Prostate gland (tissue), 2 donors: ENCODE measurements at regions of chr12 and their contacts with region 1.

Region 1: DNA sequence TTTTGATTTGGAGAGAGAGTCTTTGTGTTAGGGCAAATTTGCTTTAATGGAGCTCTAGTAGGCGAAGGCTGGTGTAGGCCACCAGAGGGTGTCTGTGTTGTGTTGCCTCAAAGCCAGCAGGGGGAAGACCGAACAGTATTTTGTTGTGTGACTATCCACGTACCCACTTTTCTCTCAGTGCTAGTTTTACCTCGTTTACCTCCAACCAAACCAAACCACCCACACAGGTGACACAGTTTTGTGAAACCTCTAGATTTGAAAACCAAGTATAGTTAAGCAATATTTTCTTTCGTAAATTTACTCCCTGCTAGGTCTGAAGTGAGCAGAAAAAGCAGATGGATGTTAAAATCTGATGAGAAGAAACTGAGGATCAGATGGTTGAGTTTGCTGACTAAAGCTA is 36.3 kb upstream of the NPFF start:
- DNase-seq: peak; percentile 71
- H3K4me3 ChIP-seq: no peak overlapping the region
- H3K27ac ChIP-seq: peak overlapping the region; percentile 32 to 72
- H3K4me1 ChIP-seq: peaks cover 4% of the 10 kb centered on the region
- H3K27me3 ChIP-seq: no peaks in the 10 kb centered on the region
- CTCF ChIP-seq: peak; percentile 79 to 98 (median 91)
- POLR2A ChIP-seq: no peak

Region 2: DNA sequence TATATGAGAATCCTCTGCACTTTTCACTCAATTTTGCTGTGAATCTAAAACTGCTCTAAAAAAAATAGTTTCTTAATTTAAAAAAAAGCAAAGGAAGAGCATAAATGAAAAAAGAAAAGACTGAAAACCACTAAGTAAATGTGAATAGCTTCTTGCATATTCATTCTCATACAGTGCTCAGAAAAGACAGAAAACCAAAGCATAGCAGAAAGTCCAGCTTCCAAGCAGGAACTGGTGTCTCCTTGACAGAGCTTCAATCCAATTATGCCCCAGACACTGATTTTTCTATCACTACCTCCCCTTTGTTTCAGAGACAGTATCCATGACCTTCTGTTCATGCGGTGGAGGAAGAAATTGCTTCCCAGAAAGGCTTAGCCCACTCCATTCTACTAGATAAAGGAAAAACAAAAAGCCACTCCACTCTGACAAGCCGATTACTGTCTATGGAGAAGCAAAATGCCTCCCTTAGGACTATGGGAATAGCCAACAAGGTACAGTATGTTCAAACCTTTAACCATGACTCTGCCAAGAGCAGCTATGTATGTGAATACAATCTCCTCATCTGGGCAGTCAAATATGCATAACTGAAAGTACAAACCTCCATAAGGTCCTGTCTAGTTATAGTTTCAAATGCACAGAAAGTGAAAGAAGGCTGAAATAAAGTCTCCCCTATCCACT is 42.0 kb after region 1 on chr12:
- intact Hi-C with region 1: no loop called
- DNase-seq: no peak
- H3K4me3 ChIP-seq: no peak overlapping the region
- H3K27ac ChIP-seq: no peak overlapping the region
- H3K4me1 ChIP-seq: peaks cover under 1% of the 10 kb centered on the region
- H3K27me3 ChIP-seq: no peaks in the 10 kb centered on the region
- CTCF ChIP-seq: no peak
- POLR2A ChIP-seq: no peak

Region 3: DNA sequence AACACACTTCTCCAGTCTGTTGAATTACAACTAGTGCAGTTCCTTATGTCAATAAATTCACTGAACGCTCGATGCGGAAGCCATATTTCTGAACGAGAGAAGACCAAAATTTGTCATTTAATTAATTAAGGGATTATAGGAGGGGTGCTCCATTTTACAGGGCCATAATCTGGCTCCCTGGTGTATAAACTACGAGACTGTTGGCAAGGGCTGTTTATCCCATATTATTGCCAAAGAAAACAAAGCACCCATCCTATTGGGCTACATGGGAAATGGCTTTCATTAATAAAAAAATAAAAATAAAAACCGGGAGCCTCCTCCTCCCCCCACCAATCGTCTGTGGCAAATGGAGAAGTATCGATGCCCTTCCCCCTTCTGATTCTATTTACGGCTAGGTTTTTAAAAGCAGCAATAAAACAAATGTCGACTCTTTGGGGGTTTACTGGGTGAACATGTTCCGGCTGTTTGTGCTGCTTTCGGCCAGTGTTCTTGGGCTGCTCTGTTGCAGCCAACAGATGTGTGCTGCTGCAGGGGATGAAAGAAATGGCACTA is 57.8 kb after region 1 on chr12:
- intact Hi-C with region 1: no loop called
- DNase-seq: no peak
- H3K4me3 ChIP-seq: peak overlapping the region; percentile 8 to 14
- H3K27ac ChIP-seq: peak overlapping the region; percentile 33 to 47
- H3K4me1 ChIP-seq: peaks cover 9% of the 10 kb centered on the region
- H3K27me3 ChIP-seq: no peaks in the 10 kb centered on the region
- CTCF ChIP-seq: no peak
- POLR2A ChIP-seq: no peak

Region 4: GRCh38 chr12:53625946-53626701 is 82.6 kb after region 1 on chr12 and contains the start of gene ATF7:
- intact Hi-C with region 1: loop called (anchors 10 kb)
- DNase-seq: peak; percentile 98
- H3K4me3 ChIP-seq: peak within 1 kb of the TSS; percentile 50 to 64
- H3K27ac ChIP-seq: peak within 1 kb of the TSS; percentile 92 to 97
- H3K4me1 ChIP-seq: peaks cover 4% of the 10 kb centered on the region
- H3K27me3 ChIP-seq: no peaks in the 10 kb centered on the region
- CTCF ChIP-seq: no peak
- POLR2A ChIP-seq: peak; percentile 57
- total RNA-seq, gene ATF7: 37.9 to 46.7 TPM

Region 5: DNA sequence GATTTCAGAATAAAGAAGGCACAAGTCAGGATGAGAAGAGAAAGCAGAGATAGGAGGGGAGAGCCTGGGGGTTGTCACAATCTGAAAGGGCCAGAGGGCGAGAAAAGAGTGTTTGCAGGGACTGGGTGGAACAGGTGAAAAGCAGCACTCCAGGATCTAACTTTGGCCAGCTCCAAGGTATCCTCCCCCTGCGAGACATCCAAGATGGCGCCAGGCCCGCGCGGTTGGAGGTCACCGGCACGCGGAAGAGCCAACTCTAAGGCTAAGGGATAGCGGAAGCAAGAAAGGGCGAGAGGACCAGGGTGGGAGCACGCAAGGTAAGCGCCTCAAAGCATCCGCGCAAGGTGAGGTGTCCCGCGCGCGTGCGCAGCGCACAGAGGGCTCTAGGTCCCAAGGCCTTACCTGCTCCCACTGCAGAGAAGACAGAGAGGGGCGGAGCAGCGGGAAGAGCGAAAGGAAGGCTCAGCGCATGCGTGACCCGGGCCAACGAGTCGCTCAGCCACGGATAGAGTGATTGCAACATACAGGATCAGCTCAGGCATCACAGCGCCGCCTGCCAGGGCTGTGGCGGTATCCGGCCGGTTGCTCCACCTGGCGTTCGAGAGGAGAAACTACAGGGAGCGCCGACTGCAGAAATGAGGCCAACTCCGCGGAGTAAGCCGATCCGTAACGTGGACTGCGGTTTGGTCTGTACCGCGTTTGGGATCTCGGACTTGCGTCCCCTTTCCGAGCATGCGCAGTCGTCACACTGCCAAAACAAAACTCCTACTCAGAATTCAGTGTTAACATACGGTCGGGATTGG is 132.3 kb after region 1 on chr12 and contains the start of gene ATP5MC2:
- intact Hi-C with region 1: loop called (anchors 2 kb)
- DNase-seq: peak; percentile 97
- H3K4me3 ChIP-seq: peak within 1 kb of the TSS; percentile 57 to 59
- H3K27ac ChIP-seq: peak within 1 kb of the TSS; percentile 84 to 89
- H3K4me1 ChIP-seq: peaks cover 9% of the 10 kb centered on the region
- H3K27me3 ChIP-seq: no peaks in the 10 kb centered on the region
- CTCF ChIP-seq: peak; percentile 99 to 100 (median 100)
- POLR2A ChIP-seq: peak; percentile 78
- total RNA-seq, gene ATP5MC2: 419 to 728 TPM

Region 6: DNA sequence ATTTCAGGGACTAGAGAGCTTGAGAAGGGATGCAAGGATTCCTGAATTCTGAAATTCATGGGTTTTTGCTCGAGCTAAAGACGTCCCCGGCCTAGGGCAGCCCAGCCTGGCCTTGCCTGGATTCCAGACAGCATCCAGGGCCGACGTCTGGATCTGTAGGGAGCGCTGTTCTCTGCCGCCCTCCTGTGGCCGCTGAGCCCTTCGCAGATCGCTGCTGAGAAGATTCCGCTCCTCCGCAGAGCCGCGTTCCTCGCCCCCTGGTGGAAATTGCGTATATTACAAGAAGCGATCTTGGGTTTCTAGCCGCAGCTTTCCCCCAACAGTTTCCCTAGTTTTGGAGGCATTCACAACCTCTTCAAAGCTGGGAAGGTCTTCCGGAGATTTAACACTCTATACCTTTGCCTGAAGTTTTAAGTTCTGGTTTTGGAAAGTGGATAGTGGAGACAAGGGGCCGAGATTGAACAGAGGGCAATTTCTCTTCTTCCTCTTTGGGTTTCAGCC is 203.1 kb after region 1 on chr12:
- intact Hi-C with region 1: loop called (anchors 5 kb)
- DNase-seq: peak; percentile 91
- H3K4me3 ChIP-seq: no peak overlapping the region
- H3K27ac ChIP-seq: no peak overlapping the region
- H3K4me1 ChIP-seq: peaks cover 10% of the 10 kb centered on the region
- H3K27me3 ChIP-seq: peaks cover 5% of the 10 kb centered on the region
- CTCF ChIP-seq: peak; percentile 95 to 100 (median 98)
- POLR2A ChIP-seq: no peak

Region 7: GRCh38 chr12:53757095-53757770 is 213.7 kb after region 1 on chr12:
- intact Hi-C with region 1: no loop called
- DNase-seq: peak; percentile 50
- H3K4me3 ChIP-seq: no peak overlapping the region
- H3K27ac ChIP-seq: no peak overlapping the region
- H3K4me1 ChIP-seq: peaks cover 7% of the 10 kb centered on the region
- H3K27me3 ChIP-seq: peaks cover 8% of the 10 kb centered on the region
- CTCF ChIP-seq: peak; percentile 37 to 63 (median 52)
- POLR2A ChIP-seq: no peak